ENCODE measurements at regions of chr2 and their contacts with region 1.

Region 1: DNA sequence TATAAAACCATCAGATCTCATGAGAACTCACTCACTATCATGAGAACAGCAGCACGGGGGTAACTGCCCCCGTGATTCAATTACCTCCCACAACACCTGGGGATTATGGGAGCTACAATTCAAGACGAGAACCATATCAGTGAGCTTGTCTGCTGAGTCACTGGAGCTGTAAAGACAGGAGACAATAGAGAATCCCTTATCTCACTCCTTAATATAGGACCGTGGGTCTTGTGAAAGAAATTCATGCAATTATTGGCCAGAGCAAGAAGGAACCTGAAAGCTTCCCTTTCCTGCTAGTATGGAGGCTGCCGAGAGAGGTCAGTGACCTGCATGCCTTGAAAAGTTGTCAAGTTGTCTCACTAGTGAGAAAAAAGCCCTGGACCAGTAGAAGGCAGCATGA is 9.5 kb upstream of the TNFAIP6 start:
- DNase-seq: peak; percentile 22 to 52 (median 46)
- H3K4me3 ChIP-seq: peak overlapping the region in 1 of 3 experiments; percentile 2
- H3K4me3 Mint-ChIP-seq: no peak overlapping the region
- H3K27ac ChIP-seq: peak overlapping the region in 1 of 2 donors; percentile 8
- H3K27ac Mint-ChIP-seq: peak overlapping the region; percentile 34 to 89 (median 79)
- H3K4me1 ChIP-seq: peaks cover 24 to 25% of the 10 kb centered on the region in 2 donors
- H3K4me1 Mint-ChIP-seq: peaks cover 33% of the 10 kb centered on the region
- H3K27me3 ChIP-seq: no peaks in the 10 kb centered on the region
- H3K27me3 Mint-ChIP-seq: no peaks in the 10 kb centered on the region
- CTCF ChIP-seq: no peak

Region 2: DNA sequence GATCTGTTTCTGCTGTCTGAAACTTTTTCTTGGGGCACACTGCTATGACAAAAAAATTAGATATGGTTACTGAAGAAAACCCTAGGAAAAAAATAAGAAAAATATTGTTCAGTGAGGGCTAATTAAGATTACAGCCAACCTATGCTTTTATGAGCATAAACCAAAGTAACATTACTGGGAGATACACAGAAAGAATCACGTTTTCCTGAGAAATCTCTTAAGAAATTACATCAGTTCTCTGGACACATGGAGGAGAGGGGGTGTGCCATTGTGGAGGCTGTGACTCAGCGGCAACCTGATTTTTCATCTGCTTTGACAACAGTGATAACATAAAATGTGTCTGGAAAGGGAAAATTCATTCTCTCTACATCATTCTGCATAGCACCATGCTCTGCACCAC is 45.0 kb before region 1 on chr2:
- intact Hi-C with region 1: loop called in 1 of 2 experiments (anchors 5 kb)
- DNase-seq: no peak
- H3K4me3 ChIP-seq: no peak overlapping the region
- H3K4me3 Mint-ChIP-seq: no peak overlapping the region
- H3K27ac ChIP-seq: no peak overlapping the region
- H3K27ac Mint-ChIP-seq: peak overlapping the region in 1 of 7 donors; percentile 62
- H3K4me1 ChIP-seq: peaks cover 12 to 15% of the 10 kb centered on the region in 2 donors
- H3K4me1 Mint-ChIP-seq: peaks cover 28% of the 10 kb centered on the region
- H3K27me3 ChIP-seq: no peaks in the 10 kb centered on the region
- H3K27me3 Mint-ChIP-seq: peaks cover 0 to 2% (median 2%) of the 10 kb centered on the region in 3 donors
- CTCF ChIP-seq: no peak

Measured in CD14-positive monocyte (primary cell).